Activated B cell treated with CpG ODN at 0.5 μM for 24 hours (primary cell): ENCODE measurements at regions of chr14 and their contacts with region 1.

Region 1: GRCh38 chr14:24146978-24147760 is at the start of gene RNF31:
- DNase-seq: peak; percentile 91
- ATAC-seq: peak; percentile 85
- H3K4me3 Mint-ChIP-seq: peak within 1 kb of the TSS; percentile 97
- H3K27ac Mint-ChIP-seq: peak within 1 kb of the TSS; percentile 94
- H3K4me1 Mint-ChIP-seq: peaks cover 51% of the 10 kb centered on the region
- H3K27me3 Mint-ChIP-seq: no peaks in the 10 kb centered on the region
- CTCF ChIP-seq: no peak
- total RNA-seq, gene RNF31: 87.4 and 99.8 TPM in 2 replicates

Region 2: GRCh38 chr14:24080888-24081738 is 66.1 kb before region 1 on chr14:
- CTCF ChIA-PET with region 1: no interaction called
- POLR2A ChIA-PET with region 1: interaction called, 10 read pairs
- intact Hi-C with region 1: loop called (anchors 2 kb)
- DNase-seq: peak; percentile 75
- ATAC-seq: peak; percentile 95
- H3K4me3 Mint-ChIP-seq: peak overlapping the region; percentile 82
- H3K27ac Mint-ChIP-seq: peak overlapping the region; percentile 83
- H3K4me1 Mint-ChIP-seq: peaks cover 32% of the 10 kb centered on the region
- H3K27me3 Mint-ChIP-seq: no peaks in the 10 kb centered on the region
- CTCF ChIP-seq: no peak

Region 3: GRCh38 chr14:24123508-24124417 is 23.4 kb before region 1 on chr14:
- CTCF ChIA-PET with region 1: no interaction called
- POLR2A ChIA-PET with region 1: interaction called, 16 read pairs
- intact Hi-C with region 1: no loop called
- DNase-seq: no peak
- ATAC-seq: peak; percentile 83
- H3K4me3 Mint-ChIP-seq: peak overlapping the region; percentile 52
- H3K27ac Mint-ChIP-seq: peak overlapping the region; percentile 93
- H3K4me1 Mint-ChIP-seq: peaks cover 38% of the 10 kb centered on the region
- H3K27me3 Mint-ChIP-seq: no peaks in the 10 kb centered on the region
- CTCF ChIP-seq: no peak

Region 4: DNA sequence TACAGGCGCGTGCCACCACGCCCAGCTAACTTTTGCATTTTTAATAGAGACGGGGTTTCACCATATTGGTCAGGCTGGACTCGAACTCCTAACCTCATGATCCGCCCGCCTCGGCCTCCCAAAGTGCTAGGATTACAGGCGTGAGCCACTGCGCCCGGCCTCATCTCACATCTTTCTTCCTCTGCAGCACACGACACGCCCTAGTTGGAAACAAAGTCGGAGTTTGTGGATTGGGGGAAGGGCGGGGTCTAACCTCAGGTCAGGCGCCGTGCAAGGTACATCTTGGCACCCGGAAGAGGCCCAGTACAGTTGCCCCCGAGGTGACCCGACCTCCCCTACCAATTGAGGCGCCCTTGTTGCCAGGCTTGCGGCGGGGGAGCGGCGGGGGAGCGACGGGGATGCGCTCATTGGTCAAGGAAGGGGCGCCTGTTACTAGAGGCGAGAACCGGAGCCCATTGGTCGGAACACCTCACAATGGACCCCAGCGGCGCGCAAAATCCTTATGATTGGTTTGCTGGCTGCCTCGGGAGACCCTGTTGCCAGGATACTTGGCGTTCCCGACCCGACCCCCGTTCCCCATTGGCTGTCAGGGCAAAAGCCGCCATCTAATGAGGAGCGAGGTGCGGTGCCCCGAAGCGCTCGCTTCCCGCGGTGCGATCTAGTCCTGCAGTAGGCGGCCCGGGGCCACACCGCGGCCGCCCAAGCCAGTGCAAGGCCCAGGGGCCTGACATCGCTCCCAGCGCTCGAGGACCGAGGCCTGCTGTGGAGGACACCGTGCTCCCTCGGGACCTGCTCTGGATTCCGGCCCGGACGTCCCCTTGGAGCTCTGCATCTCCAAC is 24.5 kb after region 1 on chr14 and contains the start of gene REC8:
- CTCF ChIA-PET with region 1: no interaction called
- POLR2A ChIA-PET with region 1: interaction called, 5 read pairs
- intact Hi-C with region 1: loop called (anchors 1 kb)
- DNase-seq: peak; percentile 68
- ATAC-seq: peak; percentile 91
- H3K4me3 Mint-ChIP-seq: peak within 1 kb of the TSS; percentile 90
- H3K27ac Mint-ChIP-seq: peak within 1 kb of the TSS; percentile 84
- H3K4me1 Mint-ChIP-seq: peaks cover 25% of the 10 kb centered on the region
- H3K27me3 Mint-ChIP-seq: no peaks in the 10 kb centered on the region
- CTCF ChIP-seq: no peak
- total RNA-seq, gene REC8: 27.0 and 35.3 TPM in 2 replicates

Region 5: DNA sequence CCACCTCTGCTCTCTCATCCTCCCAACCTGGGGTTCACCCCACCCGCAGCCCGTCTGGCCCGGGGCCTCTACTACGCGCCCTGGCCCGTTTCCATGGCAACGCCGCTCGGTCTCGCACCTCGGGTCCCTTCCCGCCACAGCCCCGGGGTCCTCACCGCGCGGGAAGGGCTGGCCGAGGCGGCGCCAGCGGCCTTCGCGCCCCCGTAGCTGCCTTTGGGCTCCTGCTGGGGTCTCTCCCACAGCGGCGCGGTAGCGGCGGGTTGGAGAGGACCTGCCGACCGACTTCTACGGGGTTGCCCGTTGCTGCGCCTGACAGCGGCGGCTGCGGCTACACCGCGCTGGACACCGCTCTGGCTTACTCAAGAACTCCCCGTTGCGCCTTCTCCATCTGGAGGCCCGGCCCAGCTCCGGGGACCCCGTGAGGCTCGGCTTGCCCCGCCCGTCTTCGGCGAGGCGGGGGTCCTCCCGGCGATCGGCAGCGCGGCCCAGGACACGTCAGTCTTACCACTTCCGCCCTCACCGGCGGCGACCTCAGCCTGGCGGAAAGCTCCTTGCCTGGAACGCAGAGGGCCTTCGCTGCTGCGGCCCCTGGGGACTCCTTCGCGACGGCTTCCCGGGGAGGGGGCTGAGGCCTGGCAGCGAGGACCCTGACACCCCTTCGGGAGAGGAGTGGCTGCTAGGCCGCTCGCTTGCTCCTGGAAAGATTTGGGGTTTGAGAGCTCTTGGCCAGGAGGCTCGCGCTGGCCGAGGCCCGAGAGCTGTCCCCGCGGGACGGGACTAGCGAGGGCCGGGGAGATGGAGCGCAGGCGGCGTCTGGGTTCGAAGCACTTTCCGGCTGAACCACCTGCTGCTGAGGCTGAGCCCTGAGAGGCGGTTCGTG is 48.3 kb after region 1 on chr14 and contains the start of gene TM9SF1:
- CTCF ChIA-PET with region 1: no interaction called
- POLR2A ChIA-PET with region 1: interaction called, 27 read pairs
- intact Hi-C with region 1: no loop called
- DNase-seq: peak; percentile 91
- ATAC-seq: peak; percentile 83
- H3K4me3 Mint-ChIP-seq: peak within 1 kb of the TSS; percentile 96
- H3K27ac Mint-ChIP-seq: peak within 1 kb of the TSS; percentile 97
- H3K4me1 Mint-ChIP-seq: peaks cover 48% of the 10 kb centered on the region
- H3K27me3 Mint-ChIP-seq: no peaks in the 10 kb centered on the region
- CTCF ChIP-seq: no peak
- total RNA-seq, gene TM9SF1: 24.5 and 26.3 TPM in 2 replicates

Region 6: DNA sequence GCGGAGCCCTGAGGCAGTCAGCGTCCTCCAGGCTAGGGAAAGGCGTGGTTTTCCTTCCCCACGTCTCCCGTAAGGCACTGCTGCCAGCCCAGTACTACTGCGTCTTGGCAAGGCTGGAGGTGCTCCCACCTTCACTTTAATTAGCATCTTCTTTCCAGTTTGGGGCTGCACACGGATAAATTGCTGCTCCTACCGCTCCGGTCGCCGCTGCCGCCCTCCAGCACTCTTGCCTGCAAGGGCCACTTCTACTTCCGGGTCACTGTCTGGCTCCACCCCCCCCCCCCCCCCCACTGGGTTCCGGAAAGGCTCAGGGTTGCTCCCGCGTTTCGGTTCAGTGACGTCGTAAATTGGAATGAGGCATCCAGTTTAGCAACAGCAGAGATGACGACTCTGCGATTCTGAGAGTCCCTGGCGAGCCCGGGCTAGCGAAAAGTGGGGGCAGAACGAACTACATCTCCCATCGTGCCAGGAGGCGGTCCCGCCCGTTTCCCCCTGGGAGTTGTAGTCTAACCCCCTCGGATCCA is 85.0 kb after region 1 on chr14 and contains the start of gene NEDD8:
- CTCF ChIA-PET with region 1: no interaction called
- POLR2A ChIA-PET with region 1: interaction called, 3 read pairs
- intact Hi-C with region 1: loop called (anchors 1 kb)
- DNase-seq: no peak
- ATAC-seq: peak; percentile 88
- H3K4me3 Mint-ChIP-seq: peak within 1 kb of the TSS; percentile 99
- H3K27ac Mint-ChIP-seq: peak within 1 kb of the TSS; percentile 94
- H3K4me1 Mint-ChIP-seq: peaks cover 43% of the 10 kb centered on the region
- H3K27me3 Mint-ChIP-seq: no peaks in the 10 kb centered on the region
- CTCF ChIP-seq: no peak
- total RNA-seq, gene NEDD8: 129 and 149 TPM in 2 replicates

Region 7: DNA sequence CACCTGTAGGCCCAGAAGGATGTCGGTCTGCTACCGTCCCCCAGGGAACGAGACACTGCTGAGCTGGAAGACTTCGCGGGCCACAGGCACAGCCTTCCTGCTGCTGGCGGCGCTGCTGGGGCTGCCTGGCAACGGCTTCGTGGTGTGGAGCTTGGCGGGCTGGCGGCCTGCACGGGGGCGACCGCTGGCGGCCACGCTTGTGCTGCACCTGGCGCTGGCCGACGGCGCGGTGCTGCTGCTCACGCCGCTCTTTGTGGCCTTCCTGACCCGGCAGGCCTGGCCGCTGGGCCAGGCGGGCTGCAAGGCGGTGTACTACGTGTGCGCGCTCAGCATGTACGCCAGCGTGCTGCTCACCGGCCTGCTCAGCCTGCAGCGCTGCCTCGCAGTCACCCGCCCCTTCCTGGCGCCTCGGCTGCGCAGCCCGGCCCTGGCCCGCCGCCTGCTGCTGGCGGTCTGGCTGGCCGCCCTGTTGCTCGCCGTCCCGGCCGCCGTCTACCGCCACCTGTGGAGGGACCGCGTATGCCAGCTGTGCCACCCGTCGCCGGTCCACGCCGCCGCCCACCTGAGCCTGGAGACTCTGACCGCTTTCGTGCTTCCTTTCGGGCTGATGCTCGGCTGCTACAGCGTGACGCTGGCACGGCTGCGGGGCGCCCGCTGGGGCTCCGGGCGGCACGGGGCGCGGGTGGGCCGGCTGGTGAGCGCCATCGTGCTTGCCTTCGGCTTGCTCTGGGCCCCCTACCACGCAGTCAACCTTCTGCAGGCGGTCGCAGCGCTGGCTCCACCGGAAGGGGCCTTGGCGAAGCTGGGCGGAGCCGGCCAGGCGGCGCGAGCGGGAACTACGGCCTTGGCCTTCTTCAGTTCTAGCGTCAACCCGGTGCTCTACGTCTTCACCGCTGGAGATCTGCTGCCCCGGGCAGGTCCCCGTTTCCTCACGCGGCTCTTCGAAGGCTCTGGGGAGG is 163.8 kb after region 1 on chr14 and contains the start of gene LTB4R:
- CTCF ChIA-PET with region 1: interaction called, 3 read pairs
- POLR2A ChIA-PET with region 1: no interaction called
- intact Hi-C with region 1: loop called (anchors 1 kb)
- DNase-seq: peak; percentile 73
- ATAC-seq: peak; percentile 78
- H3K4me3 Mint-ChIP-seq: peak within 1 kb of the TSS; percentile 75
- H3K27ac Mint-ChIP-seq: peak within 1 kb of the TSS; percentile 80
- H3K4me1 Mint-ChIP-seq: peaks cover 59% of the 10 kb centered on the region
- H3K27me3 Mint-ChIP-seq: no peaks in the 10 kb centered on the region
- CTCF ChIP-seq: no peak
- total RNA-seq, gene LTB4R: 8.2 and 8.6 TPM in 2 replicates